Heart right ventricle (tissue), 16 donors: ENCODE measurements at regions of chr14 and their contacts with region 1.

Region 1: DNA sequence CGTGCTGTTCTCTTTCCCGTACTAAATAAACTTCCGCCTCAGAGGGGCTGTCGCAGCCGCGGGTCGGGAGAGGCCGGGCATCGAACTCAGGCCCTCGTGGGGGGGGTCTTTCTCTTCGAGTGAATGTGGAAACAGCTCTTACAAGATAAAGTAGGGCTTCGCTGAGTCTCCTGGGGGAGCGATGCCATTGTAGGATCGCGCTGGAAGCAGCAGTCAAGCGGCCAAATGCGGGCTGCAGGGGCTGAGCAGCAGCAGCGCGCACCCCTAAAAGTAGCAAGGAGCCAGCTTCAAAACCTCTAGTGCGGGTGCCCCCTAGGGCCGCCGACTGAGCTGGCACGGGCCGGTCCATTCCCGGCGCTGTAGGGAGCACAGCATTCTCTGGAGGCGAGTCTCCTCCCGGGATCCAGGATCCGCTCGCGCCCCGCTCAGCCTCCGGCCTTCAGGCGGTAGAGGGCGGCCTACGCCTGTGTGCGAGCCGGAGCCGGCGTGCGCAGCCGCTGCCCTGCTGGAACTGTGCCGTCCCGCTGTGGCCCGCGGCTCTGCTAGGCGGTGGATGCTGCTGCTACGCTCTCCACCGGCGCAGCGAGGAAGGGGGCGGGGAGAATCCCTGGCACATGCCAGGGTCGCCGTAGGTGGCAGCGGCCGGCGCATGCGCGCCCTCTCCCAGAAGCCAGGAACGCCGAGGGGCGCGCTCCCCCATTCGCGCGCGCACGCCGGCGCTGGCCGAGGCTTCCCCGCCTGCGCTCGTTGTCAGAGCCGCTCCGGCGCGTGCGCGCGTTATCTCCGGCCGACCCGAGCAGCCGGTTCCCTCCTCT is at the start of gene FUT8:
- DNase-seq: peak; percentile 94 to 96
- ATAC-seq: peak; percentile 90 to 98 (median 94)
- H3K4me3 ChIP-seq: peak within 1 kb of the TSS; percentile 60 to 94 (median 86)
- H3K27ac ChIP-seq: peak within 1 kb of the TSS; percentile 77 to 98 (median 92)
- H3K4me1 ChIP-seq: peaks cover 0 to 24% (median 12%) of the 10 kb centered on the region in 9 donors
- H3K27me3 ChIP-seq: no peaks in the 10 kb centered on the region
- CTCF ChIP-seq: peak; percentile 38 to 76 (median 59)
- total RNA-seq, gene FUT8: 8.3 to 16.1 (median 11.0) TPM

Region 2: DNA sequence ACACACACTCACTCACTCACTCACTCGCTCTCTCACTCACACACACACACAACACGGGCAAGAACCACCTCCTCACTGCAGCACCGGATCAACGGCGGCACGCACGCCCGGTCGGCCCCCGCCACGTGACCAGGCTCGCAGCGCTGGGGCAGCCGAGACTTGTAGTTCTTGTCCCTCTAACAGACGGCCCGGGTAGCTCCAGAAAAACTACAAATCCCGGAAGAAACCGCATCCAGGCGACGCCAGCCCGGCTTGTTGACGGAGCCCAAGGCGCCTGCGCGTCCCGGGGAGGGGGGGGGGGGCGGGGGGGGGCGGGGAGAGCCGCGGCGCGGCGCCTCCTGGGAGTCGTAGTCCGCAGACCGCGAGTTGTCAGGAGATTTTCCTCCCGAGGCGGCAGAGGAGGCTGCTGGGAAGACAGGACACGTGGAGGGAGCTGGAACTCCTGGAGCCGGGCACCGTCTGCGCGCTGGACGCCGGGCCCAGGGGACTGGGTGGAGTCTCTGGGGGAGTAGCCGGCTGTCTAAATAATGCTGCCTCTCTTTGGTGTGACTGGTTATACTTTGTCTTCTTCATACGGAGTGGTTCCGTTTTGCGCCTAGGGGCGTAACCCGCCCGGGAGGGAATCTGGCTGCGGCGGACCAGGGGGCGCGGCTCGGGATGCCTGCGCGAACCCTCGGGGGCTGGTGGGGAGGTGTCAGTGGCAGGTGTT is 309.6 kb before region 1 on chr14 and contains the start of gene MAX:
- intact Hi-C with region 1: loop called in 1 of 10 experiments (anchors 5 kb)
- DNase-seq: peak; percentile 97 to 98
- ATAC-seq: peak; percentile 96 to 97 (median 97)
- H3K4me3 ChIP-seq: peak within 1 kb of the TSS; percentile 64 to 98 (median 93)
- H3K27ac ChIP-seq: peak within 1 kb of the TSS; percentile 52 to 98 (median 92)
- H3K4me1 ChIP-seq: peaks cover 10 to 46% (median 39%) of the 10 kb centered on the region in 9 donors
- H3K27me3 ChIP-seq: no peaks in the 10 kb centered on the region
- CTCF ChIP-seq: peak in 1 of 9 donors; percentile 6
- total RNA-seq, gene MAX: 54.5 to 95.7 (median 73.7) TPM

Region 3: GRCh38 chr14:65169351-65169750 is 242.9 kb before region 1 on chr14:
- intact Hi-C with region 1: loop called in 7 of 10 experiments (anchors 2 to 10 kb)
- DNase-seq: peak in 1 of 2 donors; percentile 10
- ATAC-seq: peak in 7 of 8 donors; percentile 54 to 85 (median 71)
- H3K4me3 ChIP-seq: no peak overlapping the region
- H3K27ac ChIP-seq: peak overlapping the region in 6 of 10 donors; percentile 17 to 58 (median 47)
- H3K4me1 ChIP-seq: peaks cover 0 to 25% (median 7%) of the 10 kb centered on the region in 9 donors
- H3K27me3 ChIP-seq: peaks cover 0 to 24% (median 12%) of the 10 kb centered on the region in 7 donors
- CTCF ChIP-seq: no peak

Region 4: DNA sequence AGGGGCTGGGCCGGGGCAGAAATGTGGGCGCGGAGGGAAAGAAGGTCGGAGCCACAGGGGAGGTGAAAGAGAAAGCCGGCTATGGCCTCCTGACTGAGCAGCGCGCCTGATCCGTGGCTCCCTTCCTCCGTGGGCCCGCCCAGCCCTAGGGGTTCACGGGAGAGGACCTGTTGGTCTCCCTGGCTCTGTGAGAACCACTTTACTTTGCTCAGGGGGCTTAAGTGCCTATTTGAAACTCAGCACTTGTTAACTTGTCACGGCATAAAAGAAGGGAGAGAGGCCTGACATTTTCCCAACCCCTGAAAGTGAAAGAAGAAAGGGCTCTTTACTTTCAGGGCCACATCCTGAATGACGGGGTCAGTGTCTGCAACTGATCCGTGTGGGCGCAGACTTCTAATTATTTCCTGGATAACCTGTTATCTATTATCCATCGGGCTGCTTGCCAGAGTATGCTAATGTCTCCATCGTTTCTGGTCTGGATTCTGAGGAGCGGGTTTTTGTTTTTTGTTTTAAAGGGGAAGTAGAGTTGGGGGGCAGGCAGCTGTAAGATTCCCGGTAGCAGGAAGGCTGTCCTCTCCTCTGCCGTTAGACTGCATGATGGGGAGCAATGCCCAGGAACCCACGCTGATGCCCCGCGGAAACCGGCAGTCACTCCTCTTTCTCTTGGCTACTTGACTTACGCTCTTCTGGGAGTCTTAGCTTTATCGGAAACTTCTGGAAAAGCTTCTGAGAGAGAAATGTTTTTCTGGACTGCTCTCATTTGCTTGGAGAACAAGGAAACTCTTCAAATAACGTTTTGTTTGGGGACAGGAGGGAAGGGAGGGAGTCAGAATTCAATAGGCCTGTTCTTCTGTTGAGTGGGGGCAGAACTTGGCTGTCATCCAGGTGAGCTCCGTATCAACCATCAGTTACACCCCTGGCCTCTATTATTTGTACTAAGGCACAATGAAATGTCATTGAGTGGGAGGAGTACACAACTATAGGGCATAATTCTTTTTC is 182.2 kb before region 1 on chr14:
- intact Hi-C with region 1: loop called in 3 of 10 experiments (anchors 5 to 10 kb)
- DNase-seq: peak; percentile 49 to 78
- ATAC-seq: peak; percentile 70 to 95 (median 90)
- H3K4me3 ChIP-seq: peak overlapping the region in 9 of 10 donors; percentile 11 to 52 (median 45)
- H3K27ac ChIP-seq: peak overlapping the region; percentile 51 to 95 (median 86)
- H3K4me1 ChIP-seq: peaks cover 0 to 47% (median 11%) of the 10 kb centered on the region in 9 donors
- H3K27me3 ChIP-seq: no peaks in the 10 kb centered on the region
- CTCF ChIP-seq: no peak

Region 5: DNA sequence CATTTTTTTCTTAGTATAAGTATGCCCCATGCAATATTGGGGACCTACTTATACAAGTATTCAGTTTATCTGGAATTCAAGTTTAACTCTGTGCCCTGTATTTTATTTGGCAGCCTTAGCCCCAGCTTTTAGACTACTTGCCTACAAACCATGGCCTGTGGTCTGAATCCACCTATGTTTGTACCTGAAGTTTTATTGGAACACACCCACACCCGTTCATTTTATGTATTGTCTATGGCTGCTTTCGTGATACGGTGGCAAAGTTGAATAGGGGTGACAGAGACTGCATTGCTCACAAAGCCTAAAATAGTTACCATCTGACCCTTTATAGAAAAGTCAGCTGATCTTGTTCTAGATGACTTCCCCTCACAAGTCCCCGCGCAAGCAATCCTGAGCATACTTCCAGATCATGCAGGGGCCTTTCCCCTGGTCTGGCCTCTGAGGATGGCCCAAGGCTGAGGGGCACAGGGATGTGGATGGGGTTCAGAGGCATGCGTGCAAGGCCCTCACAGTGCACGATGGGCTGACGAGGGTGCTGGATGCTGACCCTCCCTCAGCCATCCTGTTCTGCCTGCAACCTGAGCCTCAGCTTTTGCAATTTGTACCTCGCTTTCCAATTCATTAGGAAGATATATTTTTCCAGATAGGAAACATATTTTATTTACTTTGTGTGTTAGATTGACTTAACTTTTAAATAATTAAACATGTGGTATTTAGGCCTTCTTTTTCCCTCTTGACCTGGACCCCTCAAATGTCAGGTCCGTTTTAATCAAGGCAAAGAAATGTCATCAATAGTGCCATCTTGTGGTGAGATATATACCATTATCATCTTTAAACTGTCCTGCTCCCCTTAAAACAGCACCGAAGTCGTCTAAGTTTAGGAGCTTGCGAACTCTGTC is 546.7 kb after region 1 on chr14:
- intact Hi-C with region 1: loop called in 7 of 10 experiments (anchors 5 to 10 kb)
- DNase-seq: no peak
- ATAC-seq: peak in 7 of 8 donors; percentile 19 to 69 (median 33)
- H3K4me3 ChIP-seq: no peak overlapping the region
- H3K27ac ChIP-seq: no peak overlapping the region
- H3K4me1 ChIP-seq: peaks cover 0 to 6% (median 0%) of the 10 kb centered on the region in 9 donors
- H3K27me3 ChIP-seq: peaks cover 0 to 14% (median 0%) of the 10 kb centered on the region in 7 donors
- CTCF ChIP-seq: peak; percentile 19 to 68 (median 56)